Activated CD8-positive, alpha-beta T cell treated with anti-CD3 and anti-CD28 coated beads, Interleukin-2, amount 10 ng/mL, durations not matched to agents 7 days and 5 days (primary cell): ENCODE measurements at regions of chr15 and their contacts with region 1.

Region 1: GRCh38 chr15:62847900-62848489 is 194.6 kb upstream of the TPM1 start:
- DNase-seq: peak; percentile 61
- ATAC-seq: no peak
- H3K4me3 Mint-ChIP-seq: no peak overlapping the region
- H3K27ac Mint-ChIP-seq: no peak overlapping the region
- H3K4me1 Mint-ChIP-seq: no peaks in the 10 kb centered on the region
- H3K27me3 Mint-ChIP-seq: peaks cover 7% of the 10 kb centered on the region

Region 2: GRCh38 chr15:63093486-63094205 is 245.7 kb after region 1 on chr15:
- CTCF ChIA-PET with region 1: interaction called, 16 read pairs
- POLR2A ChIA-PET with region 1: no interaction called
- DNase-seq: peak; percentile 84
- ATAC-seq: peak; percentile 94
- H3K4me3 Mint-ChIP-seq: no peak overlapping the region
- H3K27ac Mint-ChIP-seq: no peak overlapping the region
- H3K4me1 Mint-ChIP-seq: peaks cover 20% of the 10 kb centered on the region
- H3K27me3 Mint-ChIP-seq: peaks cover 1% of the 10 kb centered on the region